Activated CD4-positive, alpha-beta memory T cell treated with anti-CD3 and anti-CD28 coated beads for 36 hours (primary cell): ENCODE measurements at regions of chr12 and their contacts with region 1.

Region 1: GRCh38 chr12:57452937-57453509 is 2.1 kb upstream of the INHBE start:
- DNase-seq: peak; percentile 77
- H3K4me3 Mint-ChIP-seq: no peak overlapping the region
- H3K27ac Mint-ChIP-seq: peak overlapping the region; percentile 53
- H3K4me1 Mint-ChIP-seq: peaks cover 13% of the 10 kb centered on the region
- H3K27me3 Mint-ChIP-seq: peaks cover 1% of the 10 kb centered on the region

Region 2: GRCh38 chr12:57213058-57213715 is 239.8 kb before region 1 on chr12:
- CTCF ChIA-PET with region 1: interaction called, 19 read pairs
- POLR2A ChIA-PET with region 1: no interaction called
- intact Hi-C with region 1: no loop called
- DNase-seq: peak; percentile 90
- H3K4me3 Mint-ChIP-seq: no peak overlapping the region
- H3K27ac Mint-ChIP-seq: no peak overlapping the region
- H3K4me1 Mint-ChIP-seq: peaks cover 31% of the 10 kb centered on the region
- H3K27me3 Mint-ChIP-seq: peaks cover 40% of the 10 kb centered on the region

Region 3: GRCh38 chr12:57261428-57261865 is 191.6 kb before region 1 on chr12:
- CTCF ChIA-PET with region 1: interaction called, 32 read pairs
- POLR2A ChIA-PET with region 1: no interaction called
- intact Hi-C with region 1: loop called (anchors 1 kb)
- DNase-seq: no peak
- H3K4me3 Mint-ChIP-seq: no peak overlapping the region
- H3K27ac Mint-ChIP-seq: no peak overlapping the region
- H3K4me1 Mint-ChIP-seq: peaks cover 4% of the 10 kb centered on the region
- H3K27me3 Mint-ChIP-seq: no peaks in the 10 kb centered on the region

Region 4: DNA sequence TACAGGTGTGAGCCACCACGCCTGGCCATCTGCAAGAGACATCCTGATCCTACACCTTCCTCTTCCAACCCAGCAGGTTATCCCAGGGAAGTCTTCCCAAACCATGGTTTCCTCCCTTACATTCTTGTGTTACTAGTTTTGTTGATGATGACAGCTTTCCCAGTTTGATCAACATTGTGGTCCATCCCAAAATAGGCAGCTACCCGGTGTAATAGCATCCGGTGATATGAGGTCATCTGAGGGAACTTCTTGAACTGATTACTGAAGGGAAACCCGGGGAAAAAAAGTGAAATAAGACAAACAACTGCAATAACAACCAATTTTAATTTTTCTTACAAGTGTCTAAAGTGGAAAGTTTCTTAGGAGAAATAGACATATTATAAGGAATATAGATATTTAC is 156.7 kb before region 1 on chr12:
- CTCF ChIA-PET with region 1: interaction called, 10 read pairs
- POLR2A ChIA-PET with region 1: no interaction called
- intact Hi-C with region 1: no loop called
- DNase-seq: no peak
- H3K4me3 Mint-ChIP-seq: no peak overlapping the region
- H3K27ac Mint-ChIP-seq: no peak overlapping the region
- H3K4me1 Mint-ChIP-seq: no peaks in the 10 kb centered on the region
- H3K27me3 Mint-ChIP-seq: no peaks in the 10 kb centered on the region

Region 5: GRCh38 chr12:57342207-57342691 is 110.8 kb before region 1 on chr12:
- CTCF ChIA-PET with region 1: interaction called, 10 read pairs
- POLR2A ChIA-PET with region 1: no interaction called
- intact Hi-C with region 1: no loop called
- DNase-seq: peak; percentile 12
- H3K4me3 Mint-ChIP-seq: no peak overlapping the region
- H3K27ac Mint-ChIP-seq: no peak overlapping the region
- H3K4me1 Mint-ChIP-seq: peaks cover 24% of the 10 kb centered on the region
- H3K27me3 Mint-ChIP-seq: no peaks in the 10 kb centered on the region

Region 6: DNA sequence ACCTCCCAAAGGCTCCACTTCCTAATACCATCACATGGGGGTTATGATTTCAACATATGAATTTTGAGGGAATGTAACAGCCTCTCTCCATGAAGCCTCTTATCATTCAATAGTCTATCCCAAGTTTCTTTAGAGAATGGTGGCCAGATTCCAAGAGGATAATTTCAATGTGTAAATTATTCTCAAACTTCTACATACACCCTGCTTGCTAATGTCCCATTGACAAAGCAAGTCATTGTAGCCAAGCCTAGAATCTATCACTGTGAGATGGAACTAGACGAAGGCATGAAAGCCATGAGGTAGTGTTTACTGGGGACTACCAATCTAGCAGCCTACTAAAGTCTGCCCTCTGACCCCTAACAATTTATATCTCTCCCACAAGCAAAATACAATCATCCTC is 14.6 kb before region 1 on chr12:
- CTCF ChIA-PET with region 1: interaction called, 11 read pairs
- POLR2A ChIA-PET with region 1: no interaction called
- intact Hi-C with region 1: no loop called
- DNase-seq: no peak
- H3K4me3 Mint-ChIP-seq: no peak overlapping the region
- H3K27ac Mint-ChIP-seq: no peak overlapping the region
- H3K4me1 Mint-ChIP-seq: peaks cover 4% of the 10 kb centered on the region
- H3K27me3 Mint-ChIP-seq: peaks cover 6% of the 10 kb centered on the region